BJ (cell line): ENCODE measurements at regions of chr9 and their contacts with region 1.

Region 1: GRCh38 chr9:25964239-25964638 is 286.0 kb upstream of the TUSC1 start:
- DNase-seq: peak; percentile 15
- H3K4me3 ChIP-seq: no peak overlapping the region
- H3K27me3 ChIP-seq: no peaks in the 10 kb centered on the region
- CTCF ChIP-seq: peak; percentile 54

Region 2: DNA sequence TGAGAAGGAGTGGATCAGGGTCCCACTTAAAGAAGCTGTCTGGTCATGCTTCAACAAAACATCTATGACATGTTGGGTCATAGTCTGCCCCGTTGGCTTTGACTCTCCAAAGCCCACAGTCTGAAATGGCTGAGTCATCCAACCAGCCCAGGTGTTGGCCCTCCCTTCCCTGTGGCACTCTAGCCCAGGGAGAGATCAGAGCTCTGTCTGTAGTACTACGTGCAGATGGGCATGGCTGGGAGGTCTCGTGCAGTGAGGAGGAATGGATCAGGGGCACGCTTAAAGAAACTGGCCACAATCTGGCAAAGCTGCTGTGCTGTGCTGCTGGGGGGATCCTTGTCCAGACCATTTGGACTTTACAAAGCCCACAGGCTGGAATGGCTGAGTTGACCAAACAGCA is 492.1 kb before region 1 on chr9:
- CTCF ChIA-PET with region 1: no interaction called
- POLR2A ChIA-PET with region 1: no interaction called
- DNase-seq: no peak
- H3K4me3 ChIP-seq: no peak overlapping the region
- H3K27me3 ChIP-seq: no peaks in the 10 kb centered on the region
- CTCF ChIP-seq: no peak

Region 3: GRCh38 chr9:26308328-26308727 is 344.1 kb after region 1 on chr9:
- CTCF ChIA-PET with region 1: no interaction called
- POLR2A ChIA-PET with region 1: interaction called, 12 read pairs
- DNase-seq: no peak
- H3K4me3 ChIP-seq: no peak overlapping the region
- H3K27me3 ChIP-seq: no peaks in the 10 kb centered on the region
- CTCF ChIP-seq: no peak

Region 4: GRCh38 chr9:26326473-26327044 is 362.3 kb after region 1 on chr9:
- CTCF ChIA-PET with region 1: interaction called, 20 read pairs
- POLR2A ChIA-PET with region 1: no interaction called
- DNase-seq: no peak
- H3K4me3 ChIP-seq: no peak overlapping the region
- H3K27me3 ChIP-seq: no peaks in the 10 kb centered on the region
- CTCF ChIP-seq: peak; percentile 72